ENCODE measurements at regions of chr2 and their contacts with region 1.

Region 1: GRCh38 chr2:118202707-118203303 is 114.5 kb downstream of the INSIG2 start:
- DNase-seq: peak; percentile 37
- ATAC-seq: peak; percentile 55 to 62

Region 2: DNA sequence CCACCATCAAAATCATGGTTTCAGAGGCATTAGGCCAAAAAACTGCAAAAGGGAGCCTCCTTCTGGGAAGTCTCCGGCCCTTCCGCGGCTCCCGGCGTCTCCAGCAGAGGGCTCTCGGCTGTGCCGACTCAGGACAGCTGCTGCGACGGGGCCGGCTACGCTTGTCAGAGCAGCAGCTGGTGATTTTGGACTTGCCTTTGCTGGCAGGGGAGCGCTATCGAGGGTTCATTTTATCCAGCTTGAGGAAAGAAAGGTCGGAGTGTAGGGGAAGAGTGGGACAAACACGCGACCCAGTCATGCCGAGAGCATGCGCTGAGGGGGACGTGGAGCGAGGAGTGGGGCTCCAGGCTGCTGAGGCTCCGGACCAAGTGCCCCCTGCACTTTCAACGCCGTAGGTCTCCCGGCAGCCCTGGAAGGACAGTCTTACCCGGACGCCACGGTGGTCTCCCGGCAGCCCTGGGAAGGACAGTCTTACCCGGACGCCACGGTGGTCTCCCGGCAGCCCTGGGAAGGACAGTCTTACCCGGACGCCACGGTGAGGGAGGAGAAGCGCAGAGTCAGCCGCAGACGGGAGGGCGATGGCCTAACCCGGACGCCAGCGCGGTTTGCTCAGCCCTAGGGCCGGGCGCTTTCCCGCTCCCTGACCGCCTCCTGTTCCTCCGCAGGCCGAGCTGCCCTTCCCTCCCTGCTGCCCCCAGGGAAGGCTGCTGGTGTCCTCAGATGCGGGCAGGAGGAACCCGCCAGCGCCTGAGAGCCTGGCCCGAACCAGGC is 366.6 kb before region 1 on chr2:
- intact Hi-C with region 1: no loop called
- DNase-seq: peak; percentile 90
- ATAC-seq: peak; percentile 97

Region 3: DNA sequence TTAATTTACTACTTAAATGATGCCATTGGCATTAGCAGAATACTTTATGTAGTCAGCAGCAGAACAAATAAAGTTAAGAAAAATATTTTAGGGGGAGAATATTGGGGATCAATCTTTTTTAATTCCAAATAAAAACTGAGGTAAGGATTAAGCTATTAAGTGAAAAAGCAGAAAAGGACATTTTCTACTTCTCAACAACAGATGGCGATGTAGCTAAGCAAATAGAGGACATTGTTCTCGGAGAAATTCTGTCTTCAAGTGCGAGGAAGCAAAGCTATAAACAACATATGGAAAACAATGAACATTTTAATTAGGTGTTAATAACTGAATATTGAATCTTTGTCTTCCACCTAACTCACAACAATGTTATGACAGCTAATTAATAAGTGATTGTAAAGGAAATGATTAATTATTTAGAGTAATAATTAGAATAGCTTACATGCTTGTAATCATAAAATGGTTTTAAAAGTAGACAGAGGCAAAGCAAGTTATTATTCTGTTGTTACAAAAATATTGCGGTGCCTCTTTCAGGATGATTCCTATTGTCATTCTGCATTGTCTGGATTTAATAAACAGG is 156.1 kb before region 1 on chr2:
- intact Hi-C with region 1: loop called in 1 of 2 experiments (anchors 10 kb)
- DNase-seq: no peak
- ATAC-seq: peak in 1 of 2 donors; percentile 65

Measured in left cardiac atrium (tissue), 4 donors.